Activated CD4-positive, alpha-beta T cell treated with anti-CD3 and anti-CD28 coated beads for 36 hours (primary cell): ENCODE measurements at regions of chr1 and their contacts with region 1.

Region 1: GRCh38 chr1:155920717-155921116 is 9.6 kb upstream of the RIT1 start:
- DNase-seq: no peak
- ATAC-seq: no peak
- H3K4me3 Mint-ChIP-seq: no peak overlapping the region
- H3K27ac Mint-ChIP-seq: no peak overlapping the region
- H3K4me1 Mint-ChIP-seq: no peaks in the 10 kb centered on the region
- H3K27me3 Mint-ChIP-seq: no peaks in the 10 kb centered on the region

Region 2: GRCh38 chr1:156270314-156270713 is 349.6 kb after region 1 on chr1:
- CTCF ChIA-PET with region 1: no interaction called
- POLR2A ChIA-PET with region 1: no interaction called
- intact Hi-C with region 1: loop called in 1 of 2 experiments (anchors 5 kb)
- DNase-seq: no peak
- ATAC-seq: no peak
- H3K4me3 Mint-ChIP-seq: no peak overlapping the region
- H3K27ac Mint-ChIP-seq: no peak overlapping the region
- H3K4me1 Mint-ChIP-seq: no peaks in the 10 kb centered on the region
- H3K27me3 Mint-ChIP-seq: no peaks in the 10 kb centered on the region

Region 3: DNA sequence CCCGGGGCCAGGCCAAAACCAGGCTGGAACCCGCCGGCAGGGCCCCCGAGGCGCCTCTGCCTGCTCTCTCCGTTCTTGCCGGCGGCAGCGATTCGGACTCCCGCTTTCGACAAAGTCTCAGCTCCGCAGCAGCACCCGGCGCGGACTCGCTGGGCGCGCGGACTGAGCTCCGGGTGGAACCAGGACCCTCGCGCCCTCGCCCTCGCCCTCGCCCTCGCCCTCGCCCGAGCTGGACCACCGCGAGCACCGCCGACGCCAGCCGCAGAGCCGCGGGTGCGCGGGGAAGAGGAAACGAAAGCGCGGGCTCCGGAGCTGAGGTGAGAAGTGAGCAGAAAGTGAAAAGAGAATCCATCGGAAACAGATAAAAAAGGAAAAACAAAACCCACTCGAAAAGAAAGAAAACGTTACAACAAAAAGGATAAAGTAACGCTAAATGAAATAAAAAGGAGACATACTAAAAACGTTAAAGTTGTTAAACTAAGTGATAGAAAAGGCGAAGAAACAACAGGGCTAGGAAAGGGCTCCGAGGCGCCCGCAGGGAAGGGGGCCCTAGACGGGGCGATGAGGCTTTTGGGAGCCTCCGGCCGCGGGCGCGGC is 514.9 kb after region 1 on chr1:
- CTCF ChIA-PET with region 1: no interaction called
- POLR2A ChIA-PET with region 1: no interaction called
- intact Hi-C with region 1: no loop called
- DNase-seq: peak; percentile 54
- ATAC-seq: no peak
- H3K4me3 Mint-ChIP-seq: peak overlapping the region; percentile 64
- H3K27ac Mint-ChIP-seq: no peak overlapping the region
- H3K4me1 Mint-ChIP-seq: peaks cover 38% of the 10 kb centered on the region
- H3K27me3 Mint-ChIP-seq: peaks cover 81% of the 10 kb centered on the region

Region 4: GRCh38 chr1:156876281-156876680 is 955.6 kb after region 1 on chr1:
- CTCF ChIA-PET with region 1: no interaction called
- POLR2A ChIA-PET with region 1: no interaction called
- intact Hi-C with region 1: no loop called
- DNase-seq: no peak
- ATAC-seq: no peak
- H3K4me3 Mint-ChIP-seq: no peak overlapping the region
- H3K27ac Mint-ChIP-seq: no peak overlapping the region
- H3K4me1 Mint-ChIP-seq: no peaks in the 10 kb centered on the region
- H3K27me3 Mint-ChIP-seq: peaks cover 6% of the 10 kb centered on the region